Activated T-helper 1 cell treated with anti-CD3 and anti-CD28 coated beads, Interleukin-12 subunit alpha, Interleukin-12 subunit beta, Interleukin-2, Interleukin-4 antibody, amounts not matched to agents 30 ng/mL and 10 ng/mL and 1 ng/mL, durations not matched to agents 14 hours and 24 hours and 36 hours (primary cell): ENCODE measurements at regions of chr1 and their contacts with region 1.

Region 1: GRCh38 chr1:1291548-1292441 is 11.6 kb downstream of the SCNN1D start:
- DNase-seq: peak; percentile 52
- H3K4me3 Mint-ChIP-seq: no peak overlapping the region
- H3K27ac Mint-ChIP-seq: no peak overlapping the region
- H3K4me1 Mint-ChIP-seq: no peaks in the 10 kb centered on the region
- H3K27me3 Mint-ChIP-seq: no peaks in the 10 kb centered on the region

Region 2: GRCh38 chr1:983799-984473 is 307.9 kb before region 1 on chr1:
- intact Hi-C with region 1: loop called (anchors 5 kb)
- DNase-seq: peak; percentile 43
- H3K4me3 Mint-ChIP-seq: no peak overlapping the region
- H3K27ac Mint-ChIP-seq: no peak overlapping the region
- H3K4me1 Mint-ChIP-seq: no peaks in the 10 kb centered on the region
- H3K27me3 Mint-ChIP-seq: peaks cover 19% of the 10 kb centered on the region

Region 3: GRCh38 chr1:1033009-1033587 is 258.7 kb before region 1 on chr1:
- intact Hi-C with region 1: loop called (anchors 2 kb)
- DNase-seq: peak; percentile 84
- H3K4me3 Mint-ChIP-seq: peak overlapping the region; percentile 37
- H3K27ac Mint-ChIP-seq: no peak overlapping the region
- H3K4me1 Mint-ChIP-seq: no peaks in the 10 kb centered on the region
- H3K27me3 Mint-ChIP-seq: peaks cover 14% of the 10 kb centered on the region

Region 4: GRCh38 chr1:1122078-1122811 is 169.6 kb before region 1 on chr1:
- intact Hi-C with region 1: loop called (anchors 2 kb)
- DNase-seq: peak; percentile 80
- H3K4me3 Mint-ChIP-seq: no peak overlapping the region
- H3K27ac Mint-ChIP-seq: no peak overlapping the region
- H3K4me1 Mint-ChIP-seq: peaks cover 5% of the 10 kb centered on the region
- H3K27me3 Mint-ChIP-seq: peaks cover 11% of the 10 kb centered on the region

Region 5: GRCh38 chr1:1507305-1507704 is 215.5 kb after region 1 on chr1:
- intact Hi-C with region 1: no loop called
- DNase-seq: no peak
- H3K4me3 Mint-ChIP-seq: no peak overlapping the region
- H3K27ac Mint-ChIP-seq: no peak overlapping the region
- H3K4me1 Mint-ChIP-seq: peaks cover 21% of the 10 kb centered on the region
- H3K27me3 Mint-ChIP-seq: no peaks in the 10 kb centered on the region

Region 6: DNA sequence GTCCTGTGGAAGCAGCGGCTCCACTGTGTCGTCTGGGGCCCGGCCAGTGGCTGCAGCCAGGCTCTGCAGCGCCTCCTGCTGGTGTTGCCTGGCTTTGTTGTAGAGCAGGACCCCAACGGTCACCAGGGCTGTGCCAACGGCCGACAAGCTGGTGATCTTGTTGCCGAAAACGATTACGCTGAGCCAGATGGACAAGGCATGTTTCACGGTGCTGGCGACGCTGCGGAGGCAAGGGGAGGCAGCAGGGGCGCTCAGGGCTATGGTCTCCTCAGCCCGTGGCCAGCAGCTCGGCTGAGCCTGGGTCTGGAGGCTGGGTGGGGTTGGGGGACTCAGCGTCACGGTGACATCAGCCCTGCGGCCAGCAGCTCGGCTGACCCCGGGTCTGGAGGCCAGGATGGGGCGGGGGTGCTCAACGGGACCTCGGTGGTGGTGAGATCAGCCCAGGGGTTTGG is 374.0 kb after region 1 on chr1:
- intact Hi-C with region 1: no loop called
- DNase-seq: no peak
- H3K4me3 Mint-ChIP-seq: no peak overlapping the region
- H3K27ac Mint-ChIP-seq: no peak overlapping the region
- H3K4me1 Mint-ChIP-seq: no peaks in the 10 kb centered on the region
- H3K27me3 Mint-ChIP-seq: no peaks in the 10 kb centered on the region